ENCODE measurements at regions of chr7 and their contacts with region 1.

Region 1: GRCh38 chr7:831596-832166 is 595 bp upstream of the SUN1 start:
- DNase-seq: no peak
- ATAC-seq: peak; percentile 59

Region 2: DNA sequence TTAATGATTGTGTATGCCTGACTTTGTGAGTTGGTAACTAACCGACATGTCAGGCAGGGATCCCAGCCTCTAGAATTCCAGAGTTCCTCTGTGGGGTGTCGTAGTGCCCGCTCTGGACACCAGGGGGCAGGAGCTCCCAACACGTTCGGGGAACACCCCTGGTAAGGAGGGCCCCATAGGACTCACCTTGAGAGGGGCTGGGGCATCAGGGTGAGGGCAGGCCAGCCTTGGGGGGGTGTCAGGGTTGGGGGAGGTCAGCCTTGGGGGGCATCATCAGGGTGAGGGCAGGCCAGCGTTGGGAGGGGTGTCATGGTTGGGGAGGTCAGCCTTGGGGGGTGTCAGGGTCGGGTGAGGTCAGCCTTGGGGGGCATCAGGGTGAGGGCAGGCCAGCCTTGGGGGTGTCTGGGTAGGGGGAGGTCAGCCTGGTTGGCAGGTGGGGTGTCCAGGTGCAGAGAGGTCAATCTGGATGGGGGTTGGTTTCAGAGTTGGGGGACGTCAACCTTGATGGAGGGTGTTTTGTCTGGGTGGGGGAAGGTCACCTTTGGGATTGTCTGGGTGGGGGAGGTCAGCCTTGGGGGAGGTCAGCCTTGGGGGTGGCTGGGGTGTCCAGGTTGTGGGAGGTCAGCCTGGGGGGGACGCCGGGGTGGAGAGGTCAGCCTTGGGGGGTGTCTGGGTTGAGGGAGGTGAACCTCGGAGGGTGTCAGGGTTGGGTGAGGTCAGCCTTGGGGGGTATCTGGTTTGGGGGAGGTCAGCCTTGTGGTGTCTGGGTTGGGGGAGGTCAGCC is 45.0 kb before region 1 on chr7:
- intact Hi-C with region 1: loop called (anchors 5 kb)
- DNase-seq: no peak
- ATAC-seq: peak; percentile 84

Region 3: GRCh38 chr7:816300-816750 is 15.4 kb before region 1 on chr7:
- intact Hi-C with region 1: loop called (anchors 2 kb)
- DNase-seq: peak; percentile 99
- ATAC-seq: peak; percentile 92